Left ventricle myocardium inferior (tissue), 1 donor: ENCODE measurements at regions of chr4 and their contacts with region 1.

Region 1: DNA sequence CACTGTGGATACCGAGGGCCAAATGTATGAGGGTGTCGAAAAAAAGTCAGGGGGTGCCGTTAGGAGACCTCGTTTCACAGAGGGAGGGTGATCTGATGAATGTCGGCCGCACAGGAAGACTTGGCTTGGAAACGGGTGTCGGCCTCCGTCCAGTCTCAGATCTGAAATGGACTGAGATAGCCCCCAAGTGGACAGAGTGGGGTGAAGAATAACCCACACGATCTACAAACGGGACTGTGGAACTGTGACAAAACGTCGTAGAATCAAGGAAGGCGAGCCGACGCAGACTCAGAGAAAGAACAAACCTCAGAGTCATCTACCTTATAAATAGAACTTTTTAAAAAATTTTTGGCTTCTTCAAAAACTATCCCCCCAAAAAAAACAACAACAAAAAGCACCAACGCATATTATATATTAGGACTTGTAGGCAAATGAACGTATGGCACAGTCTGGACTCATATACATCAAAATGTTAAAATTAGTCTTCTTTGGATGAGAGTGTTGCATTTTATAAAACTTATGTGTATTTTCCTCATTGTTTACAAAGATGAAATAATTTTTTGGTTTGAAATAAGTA is 63.8 kb upstream of the IRF2 start:
- DNase-seq: peak; percentile 91
- H3K4me3 ChIP-seq: peak overlapping the region; percentile 71
- H3K27ac ChIP-seq: peak overlapping the region; percentile 95
- H3K4me1 ChIP-seq: peaks cover 40% of the 10 kb centered on the region
- H3K27me3 ChIP-seq: no peaks in the 10 kb centered on the region
- CTCF ChIP-seq: peak; percentile 84

Region 2: DNA sequence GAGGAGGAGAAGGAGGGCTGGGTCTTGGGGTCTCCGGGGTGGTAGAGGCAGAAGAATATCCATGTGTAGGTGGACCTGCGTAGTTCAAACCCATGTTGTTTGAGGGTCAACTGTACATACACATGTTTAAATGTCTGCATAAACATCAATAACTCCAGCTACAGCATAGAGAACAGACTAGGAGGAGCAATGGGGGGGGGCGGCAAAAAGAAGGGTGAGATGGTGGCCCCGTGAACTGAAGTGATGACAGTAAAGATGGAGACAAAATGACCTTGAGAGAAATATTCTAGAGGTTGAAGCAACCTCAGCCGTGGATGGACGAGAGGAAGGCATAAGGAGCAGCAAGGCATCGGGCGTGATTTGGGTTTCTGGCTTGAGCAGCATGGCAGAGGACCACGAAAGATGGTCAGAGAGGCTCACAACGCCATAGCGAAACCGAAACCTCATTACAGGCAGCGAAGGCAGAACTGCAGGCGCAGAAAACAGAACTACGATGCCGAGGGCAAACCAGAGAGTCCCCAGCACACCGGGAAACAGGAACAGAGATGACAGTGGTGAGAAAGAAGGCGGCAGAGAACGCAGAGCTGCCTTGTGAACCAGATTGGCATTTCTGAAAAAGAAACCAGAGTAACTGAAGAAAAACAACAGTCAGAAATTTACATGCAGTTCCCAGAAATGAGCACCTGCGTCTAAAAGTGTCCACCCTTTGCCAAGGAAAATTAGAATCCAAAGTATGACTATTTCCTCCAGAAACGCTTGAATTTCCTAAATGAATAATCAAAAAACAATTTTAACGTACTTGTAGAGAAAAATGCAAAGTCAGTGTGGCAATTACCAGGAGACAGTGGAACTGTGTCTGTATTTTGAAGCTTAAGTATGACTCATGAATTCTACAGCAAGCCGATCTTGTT is 270.2 kb before region 1 on chr4:
- intact Hi-C with region 1: loop called (anchors 5 kb)
- DNase-seq: peak; percentile 30
- H3K4me3 ChIP-seq: no peak overlapping the region
- H3K27ac ChIP-seq: peak overlapping the region; percentile 56
- H3K4me1 ChIP-seq: peaks cover 3% of the 10 kb centered on the region
- H3K27me3 ChIP-seq: no peaks in the 10 kb centered on the region
- CTCF ChIP-seq: no peak

Region 3: GRCh38 chr4:184288451-184289178 is 249.5 kb before region 1 on chr4:
- intact Hi-C with region 1: no loop called
- DNase-seq: no peak
- H3K4me3 ChIP-seq: no peak overlapping the region
- H3K27ac ChIP-seq: peak overlapping the region; percentile 30
- H3K4me1 ChIP-seq: peaks cover 13% of the 10 kb centered on the region
- H3K27me3 ChIP-seq: no peaks in the 10 kb centered on the region
- CTCF ChIP-seq: no peak

Region 4: GRCh38 chr4:184474263-184475095 is 63.6 kb before region 1 on chr4 and contains the start of gene IRF2:
- intact Hi-C with region 1: loop called (anchors 5 kb)
- DNase-seq: peak; percentile 98
- H3K4me3 ChIP-seq: peak within 1 kb of the TSS; percentile 95
- H3K27ac ChIP-seq: peak within 1 kb of the TSS; percentile 98
- H3K4me1 ChIP-seq: peaks cover 74% of the 10 kb centered on the region
- H3K27me3 ChIP-seq: no peaks in the 10 kb centered on the region
- CTCF ChIP-seq: peak; percentile 41
- total RNA-seq, gene IRF2: 25.9 TPM

Region 5: GRCh38 chr4:185068837-185069236 is 530.7 kb after region 1 on chr4:
- intact Hi-C with region 1: no loop called
- DNase-seq: no peak
- H3K4me3 ChIP-seq: no peak overlapping the region
- H3K27ac ChIP-seq: no peak overlapping the region
- H3K4me1 ChIP-seq: peaks cover 4% of the 10 kb centered on the region
- H3K27me3 ChIP-seq: no peaks in the 10 kb centered on the region
- CTCF ChIP-seq: peak; percentile 9